K562 (cell line): ENCODE measurements at regions of chr1 and their contacts with region 1.

Region 1: DNA sequence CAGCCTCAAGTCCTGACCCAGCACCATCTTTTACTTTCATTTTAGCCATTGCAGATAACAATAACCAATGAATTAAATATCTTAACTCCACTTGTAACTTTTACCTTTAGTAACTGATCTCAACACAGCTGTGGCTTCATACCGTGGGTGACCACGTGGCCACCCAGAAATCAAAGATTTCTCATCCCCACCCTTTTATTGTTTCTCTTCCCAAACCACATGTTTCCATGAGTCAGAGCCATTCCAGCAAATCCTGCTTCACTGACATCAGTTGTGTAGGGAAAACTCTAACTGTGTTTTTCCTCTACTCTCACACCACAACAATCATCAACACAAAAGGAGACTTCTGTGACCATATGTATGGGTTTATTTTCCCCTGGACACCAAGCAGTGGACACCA is 25.1 kb upstream of the BRDT start:
- DNase-seq: no peak
- ATAC-seq: no peak
- H3K4me3 ChIP-seq: no peak overlapping the region
- H3K27ac ChIP-seq: no peak overlapping the region
- H3K4me1 ChIP-seq: no peaks in the 10 kb centered on the region
- H3K27me3 ChIP-seq: no peaks in the 10 kb centered on the region
- CTCF ChIP-seq: no peak
- EP300 ChIP-seq: no peak
- POLR2A ChIP-seq: no peak
- RAD21 ChIP-seq: no peak

Region 2: GRCh38 chr1:91511386-91511785 is 412.8 kb before region 1 on chr1:
- CTCF ChIA-PET with region 1: interaction called, 50 read pairs
- POLR2A ChIA-PET with region 1: no interaction called
- in situ Hi-C with region 1: loop called (anchors 5 kb)
- intact Hi-C with region 1: loop called (anchors 1 kb)
- DNase-seq: peak; percentile 15 to 52 (median 32)
- ATAC-seq: peak; percentile 72
- H3K4me3 ChIP-seq: no peak overlapping the region
- H3K27ac ChIP-seq: no peak overlapping the region
- H3K4me1 ChIP-seq: no peaks in the 10 kb centered on the region
- H3K27me3 ChIP-seq: no peaks in the 10 kb centered on the region
- CTCF ChIP-seq: peak; percentile 28 to 69 (median 45); a peak in 4 of 6 replicates
- EP300 ChIP-seq: no peak
- POLR2A ChIP-seq: no peak
- RAD21 ChIP-seq: peak; percentile 70 to 74

Region 3: GRCh38 chr1:91617285-91617765 is 306.8 kb before region 1 on chr1:
- CTCF ChIA-PET with region 1: interaction called, 5 read pairs
- POLR2A ChIA-PET with region 1: no interaction called
- in situ Hi-C with region 1: no loop called
- intact Hi-C with region 1: loop called (anchors 1 kb)
- DNase-seq: peak in 3 of 4 experiments; percentile 38 to 63 (median 46)
- ATAC-seq: peak; percentile 97
- H3K4me3 ChIP-seq: no peak overlapping the region
- H3K27ac ChIP-seq: no peak overlapping the region
- H3K4me1 ChIP-seq: no peaks in the 10 kb centered on the region
- H3K27me3 ChIP-seq: no peaks in the 10 kb centered on the region
- CTCF ChIP-seq: peak; percentile 58 to 98 (median 86)
- EP300 ChIP-seq: no peak
- POLR2A ChIP-seq: no peak
- RAD21 ChIP-seq: peak; percentile 42 to 87

Region 4: GRCh38 chr1:91948501-91949355 is 24.6 kb after region 1 on chr1:
- CTCF ChIA-PET with region 1: no interaction called
- POLR2A ChIA-PET with region 1: no interaction called
- in situ Hi-C with region 1: no loop called
- intact Hi-C with region 1: no loop called
- DNase-seq: peak in 2 of 4 experiments; percentile 16 to 23
- ATAC-seq: no peak
- H3K4me3 ChIP-seq: no peak overlapping the region
- H3K27ac ChIP-seq: no peak overlapping the region
- H3K4me1 ChIP-seq: peaks cover 0 to 5% of the 10 kb centered on the region in 2 experiments; a peak in 1 of 5 replicates
- H3K27me3 ChIP-seq: 0 out of 5 replicates have a peak, but pooled peaks cover 0 to 4% of the 10 kb centered on the region in 2 experiments
- CTCF ChIP-seq: no peak
- EP300 ChIP-seq: no peak
- POLR2A ChIP-seq: no peak
- RAD21 ChIP-seq: no peak